Panc1 (cell line): ENCODE measurements at regions of chr1 and their contacts with region 1.

Region 1: DNA sequence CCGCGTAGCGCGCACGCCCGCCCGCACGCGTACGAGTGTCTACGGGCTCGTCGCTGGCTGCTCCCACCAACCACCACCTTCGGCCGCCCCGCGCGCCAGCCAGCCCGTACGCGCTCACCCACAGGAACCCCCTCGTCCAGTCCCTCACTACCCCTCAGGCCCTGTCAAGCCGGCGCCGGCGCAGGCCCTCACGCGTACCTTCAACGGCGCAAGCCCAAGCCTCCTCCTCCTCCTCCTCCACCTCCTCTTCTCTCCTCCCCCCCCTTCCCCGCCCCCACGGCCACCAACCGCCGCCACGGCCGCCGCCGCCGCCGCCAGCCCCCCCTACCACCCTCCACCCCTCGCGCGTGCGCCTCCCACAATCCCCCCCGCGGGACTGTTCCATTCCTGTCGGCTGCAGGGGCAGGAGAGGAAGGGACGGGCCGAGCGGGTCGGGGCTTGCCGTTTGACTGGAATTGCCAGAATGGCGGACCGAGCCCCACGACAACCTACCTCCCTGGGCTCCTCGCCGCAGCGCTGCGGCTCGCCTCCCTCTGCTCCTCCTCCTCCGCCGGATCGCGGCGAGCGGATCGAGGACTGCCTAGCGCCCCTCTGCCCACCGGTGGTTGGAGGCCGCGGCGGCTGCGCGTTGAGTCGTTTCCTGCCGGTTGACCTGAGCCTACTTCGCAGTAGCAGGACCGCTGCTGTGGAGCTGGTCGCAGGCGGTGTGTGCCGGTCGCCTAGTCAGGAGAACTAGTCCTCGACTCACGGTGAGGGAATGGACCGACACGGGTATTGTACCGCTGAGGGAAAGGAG is at the start of gene ASH1L:
- DNase-seq: peak; percentile 67
- ATAC-seq: peak; percentile 94
- H3K4me3 ChIP-seq: peak within 1 kb of the TSS; percentile 74 to 92
- H3K27ac ChIP-seq: peak within 1 kb of the TSS; percentile 96
- H3K4me1 ChIP-seq: peaks cover 11% of the 10 kb centered on the region
- H3K27me3 ChIP-seq: no peaks in the 10 kb centered on the region
- CTCF ChIP-seq: no peak
- total RNA-seq, gene ASH1L: 40.9 TPM

Region 2: GRCh38 chr1:155424091-155424490 is 138.7 kb before region 1 on chr1:
- CTCF ChIA-PET with region 1: no interaction called
- POLR2A ChIA-PET with region 1: no interaction called
- in situ Hi-C with region 1: no loop called
- intact Hi-C with region 1: no loop called
- DNase-seq: no peak
- ATAC-seq: no peak
- H3K4me3 ChIP-seq: no peak overlapping the region
- H3K27ac ChIP-seq: no peak overlapping the region
- H3K4me1 ChIP-seq: no peaks in the 10 kb centered on the region
- H3K27me3 ChIP-seq: no peaks in the 10 kb centered on the region
- CTCF ChIP-seq: no peak

Region 3: GRCh38 chr1:155466996-155467395 is 95.8 kb before region 1 on chr1:
- CTCF ChIA-PET with region 1: no interaction called
- POLR2A ChIA-PET with region 1: interaction called, 26 read pairs
- in situ Hi-C with region 1: no loop called
- intact Hi-C with region 1: no loop called
- DNase-seq: peak; percentile 4
- ATAC-seq: no peak
- H3K4me3 ChIP-seq: no peak overlapping the region
- H3K27ac ChIP-seq: no peak overlapping the region
- H3K4me1 ChIP-seq: peaks cover 3% of the 10 kb centered on the region; the same call in 1 of the 2 replicates
- H3K27me3 ChIP-seq: no peaks in the 10 kb centered on the region
- CTCF ChIP-seq: no peak

Region 4: GRCh38 chr1:155540000-155540874 is 22.5 kb before region 1 on chr1:
- CTCF ChIA-PET with region 1: no interaction called
- POLR2A ChIA-PET with region 1: no interaction called
- in situ Hi-C with region 1: no loop called
- intact Hi-C with region 1: no loop called
- DNase-seq: no peak
- ATAC-seq: no peak
- H3K4me3 ChIP-seq: no peak overlapping the region
- H3K27ac ChIP-seq: no peak overlapping the region
- H3K4me1 ChIP-seq: peaks cover 19% of the 10 kb centered on the region
- H3K27me3 ChIP-seq: no peaks in the 10 kb centered on the region
- CTCF ChIP-seq: no peak